PC-9 (cell line): ENCODE measurements at regions of chr17 and their contacts with region 1.

Region 1: DNA sequence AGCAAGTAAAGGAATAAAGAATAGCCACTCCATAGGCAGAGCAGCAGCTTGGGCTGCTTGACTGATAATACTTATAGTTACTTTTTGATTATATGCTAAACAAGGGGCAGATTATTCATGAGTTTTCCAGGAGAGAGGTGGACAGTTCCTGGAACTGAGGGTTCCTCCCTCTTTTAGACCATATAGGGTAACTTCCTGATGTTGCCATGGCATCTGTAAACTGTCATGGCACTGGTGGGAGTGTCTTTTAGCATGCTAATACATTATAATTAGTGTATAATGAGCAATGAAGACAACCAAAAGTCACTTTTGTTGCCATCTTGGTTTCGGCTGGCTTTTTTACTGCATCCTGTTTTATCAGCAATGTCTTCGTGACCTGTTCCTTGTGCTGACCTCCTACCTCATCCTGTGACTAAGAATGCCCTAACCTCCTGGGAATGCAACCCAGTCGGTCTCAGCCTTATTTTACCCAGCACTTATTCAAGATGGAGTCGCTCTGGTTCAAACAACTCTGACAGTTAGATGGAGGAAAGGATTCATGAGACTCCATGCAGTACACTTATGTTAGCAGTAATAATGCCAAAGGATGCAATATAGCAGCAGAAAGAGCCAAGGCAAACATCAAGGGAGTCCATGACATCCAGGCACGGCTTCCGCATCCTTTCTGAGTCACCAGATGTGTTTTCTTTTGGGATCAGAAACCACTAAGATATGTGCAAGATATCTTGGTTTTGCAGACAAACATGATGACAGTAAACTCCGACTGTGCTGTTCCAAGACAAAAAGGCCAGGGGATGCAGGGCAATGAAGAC is 55.8 kb upstream of the B4GALNT2 start:
- DNase-seq: peak; percentile 30 to 86
- H3K4me3 ChIP-seq: no peak overlapping the region
- H3K27ac ChIP-seq: peak overlapping the region; percentile 55
- H3K4me1 ChIP-seq: peaks cover 20% of the 10 kb centered on the region
- H3K27me3 ChIP-seq: no peaks in the 10 kb centered on the region
- CTCF ChIP-seq: no peak

Region 2: DNA sequence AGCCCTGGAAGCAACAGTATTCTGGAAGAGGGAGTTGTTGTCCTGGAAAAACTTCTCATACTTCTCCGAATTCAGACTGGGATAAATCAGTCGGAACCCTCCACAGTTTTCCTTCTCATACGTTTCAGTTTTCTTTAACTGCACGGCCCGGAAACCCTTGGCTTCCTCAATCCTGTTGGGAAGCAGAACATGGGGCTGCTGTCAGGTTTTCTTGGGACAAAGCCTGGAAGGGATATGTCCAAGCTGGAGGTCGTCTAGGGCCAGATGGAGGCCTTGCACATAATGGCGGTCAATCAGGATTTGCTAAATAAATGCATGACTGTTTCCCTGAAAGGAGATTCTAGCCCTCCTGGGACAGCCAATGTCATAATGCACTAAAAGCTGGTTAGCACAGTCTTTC is 289.0 kb before region 1 on chr17:
- CTCF ChIA-PET with region 1: no interaction called
- POLR2A ChIA-PET with region 1: no interaction called
- intact Hi-C with region 1: no loop called
- DNase-seq: no peak
- H3K4me3 ChIP-seq: no peak overlapping the region
- H3K27ac ChIP-seq: no peak overlapping the region
- H3K4me1 ChIP-seq: no peaks in the 10 kb centered on the region
- H3K27me3 ChIP-seq: peaks cover 37% of the 10 kb centered on the region
- CTCF ChIP-seq: no peak

Region 3: DNA sequence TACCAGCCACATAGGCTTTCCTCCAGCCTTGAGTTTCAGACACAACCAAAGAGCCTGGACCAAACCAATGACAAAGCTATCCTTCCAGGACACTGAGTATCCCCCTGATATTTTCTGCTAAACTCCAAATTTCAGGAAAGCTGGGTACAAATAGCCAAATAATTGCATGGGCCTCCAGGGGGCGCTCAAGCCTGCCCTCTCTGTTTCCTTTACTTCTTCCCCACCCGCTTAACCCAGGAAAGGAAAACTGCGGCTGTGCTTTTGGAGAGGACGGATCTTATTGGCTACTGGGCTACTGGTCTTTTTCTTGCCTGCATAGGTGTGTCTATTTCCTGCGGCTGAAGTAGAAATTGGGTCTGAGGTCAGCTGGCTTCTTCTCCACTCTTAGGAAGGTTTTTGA is 103.5 kb after region 1 on chr17:
- CTCF ChIA-PET with region 1: interaction called, 11 read pairs
- POLR2A ChIA-PET with region 1: no interaction called
- intact Hi-C with region 1: no loop called
- DNase-seq: peak in 1 of 2 experiments; percentile 62
- H3K4me3 ChIP-seq: no peak overlapping the region
- H3K27ac ChIP-seq: no peak overlapping the region
- H3K4me1 ChIP-seq: no peaks in the 10 kb centered on the region
- H3K27me3 ChIP-seq: peaks cover 16% of the 10 kb centered on the region; the same call in 1 of the 2 replicates
- CTCF ChIP-seq: peak; percentile 87

Region 4: DNA sequence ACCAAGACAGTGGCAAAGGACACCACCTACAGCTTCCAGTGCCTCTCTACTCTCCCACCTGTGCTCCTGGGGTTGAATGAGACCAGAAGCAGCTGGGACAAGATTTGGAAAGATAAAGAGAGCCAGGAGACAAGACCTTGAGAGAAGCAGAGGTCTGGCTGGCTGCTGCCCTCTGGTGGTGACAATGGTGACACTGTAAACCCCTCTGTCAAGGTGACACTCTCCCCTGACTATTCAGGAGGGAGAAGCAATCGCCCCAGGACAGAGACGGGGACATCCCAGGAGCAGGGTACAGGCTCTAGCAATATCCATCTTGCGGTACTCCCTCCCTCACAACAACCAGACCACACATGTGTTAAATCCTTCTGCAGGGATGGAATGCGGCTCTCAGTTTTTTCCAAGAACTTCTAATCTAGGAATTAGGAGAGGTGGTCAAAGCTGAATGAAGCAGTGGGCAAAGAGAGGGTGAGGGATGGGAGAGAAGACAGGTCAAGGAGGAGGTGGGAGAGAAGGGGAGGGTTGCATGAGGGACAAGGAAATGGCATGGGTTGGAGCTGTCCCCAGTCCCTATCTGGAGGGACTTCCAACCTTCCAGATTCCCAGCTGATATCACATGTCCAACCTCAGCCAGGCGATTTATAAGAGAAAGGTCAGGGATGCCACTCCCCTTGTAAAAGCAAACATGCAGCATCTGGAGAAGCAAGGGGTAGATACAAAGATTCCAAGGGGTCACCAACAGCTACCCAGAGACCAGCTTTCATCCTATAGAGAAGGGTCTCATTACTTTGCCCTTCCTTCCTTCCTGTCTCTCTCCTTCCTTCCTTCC is 150.9 kb after region 1 on chr17:
- CTCF ChIA-PET with region 1: no interaction called
- POLR2A ChIA-PET with region 1: no interaction called
- intact Hi-C with region 1: no loop called
- DNase-seq: peak; percentile 56 to 69
- H3K4me3 ChIP-seq: no peak overlapping the region
- H3K27ac ChIP-seq: no peak overlapping the region
- H3K4me1 ChIP-seq: peaks cover 13% of the 10 kb centered on the region
- H3K27me3 ChIP-seq: peaks cover 29% of the 10 kb centered on the region; the same call in 1 of the 2 replicates
- CTCF ChIP-seq: peak; percentile 94

Region 5: DNA sequence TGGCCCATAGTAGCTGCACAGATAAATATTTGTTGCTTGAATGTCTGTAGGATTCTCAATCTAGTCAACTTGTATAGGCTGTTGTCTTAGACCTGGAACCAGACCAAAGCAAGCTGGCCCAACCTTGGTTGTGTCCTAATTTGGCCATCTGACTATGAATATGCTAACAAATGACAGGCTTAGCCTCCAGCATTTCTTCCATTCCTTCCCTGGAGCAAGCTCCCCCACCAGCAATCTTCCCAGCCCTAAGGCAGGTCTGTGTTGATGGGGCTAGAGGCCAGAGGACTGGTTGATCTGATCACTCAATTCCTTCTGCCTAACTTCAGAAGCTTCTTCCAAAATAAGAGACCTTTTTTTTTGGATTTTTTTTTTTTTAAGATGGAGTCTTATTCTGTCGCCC is 163.2 kb after region 1 on chr17:
- CTCF ChIA-PET with region 1: no interaction called
- POLR2A ChIA-PET with region 1: no interaction called
- intact Hi-C with region 1: no loop called
- DNase-seq: no peak
- H3K4me3 ChIP-seq: no peak overlapping the region
- H3K27ac ChIP-seq: no peak overlapping the region
- H3K4me1 ChIP-seq: no peaks in the 10 kb centered on the region
- H3K27me3 ChIP-seq: no peaks in the 10 kb centered on the region
- CTCF ChIP-seq: no peak